ENCODE measurements at regions of chr21 and their contacts with region 1.

Region 1: DNA sequence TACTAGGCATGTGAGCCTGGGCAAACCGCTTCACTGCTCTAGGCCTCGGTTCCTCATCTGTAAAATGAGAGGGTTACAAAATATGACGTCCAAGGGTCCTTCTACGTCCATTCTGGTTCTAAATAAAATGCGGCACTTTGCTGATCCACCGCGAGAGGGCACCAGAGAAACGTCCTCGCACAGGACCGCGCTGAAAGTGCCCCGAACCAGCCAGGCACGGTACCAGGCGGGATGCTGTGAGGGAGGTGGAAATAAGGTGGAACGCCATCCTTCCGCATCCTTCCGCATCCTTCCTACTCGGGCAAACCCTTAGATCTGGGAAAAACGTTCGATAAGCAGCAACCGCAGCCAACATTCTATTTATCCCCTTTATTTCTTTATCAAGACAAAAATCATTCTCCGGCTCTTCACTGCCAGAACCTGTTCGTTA is 60.3 kb upstream of the KRTAP19-8 start:
- DNase-seq: peak; percentile 67
- CTCF ChIP-seq: peak; percentile 90

Region 2: DNA sequence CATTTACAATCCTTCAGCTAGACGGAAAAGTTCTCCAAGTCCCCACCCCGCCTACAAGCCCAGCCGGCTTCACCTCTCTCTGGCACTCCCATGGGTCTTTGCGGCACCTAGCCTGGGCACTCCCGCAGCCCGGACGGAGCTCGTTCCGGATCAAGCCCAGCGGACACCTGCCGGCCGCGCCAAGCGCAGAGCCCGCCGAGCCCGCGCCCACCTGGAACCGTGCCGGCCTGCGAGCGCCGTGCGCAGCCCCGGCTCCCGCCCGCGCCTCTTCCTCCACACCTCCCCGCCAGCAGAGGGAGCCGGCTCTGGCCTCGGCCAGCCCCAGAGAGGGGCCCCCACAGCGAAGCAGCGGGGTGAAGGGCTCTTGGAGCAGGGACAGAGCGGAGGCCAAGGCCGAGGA is 10.3 kb before region 1 on chr21:
- CTCF ChIA-PET with region 1: interaction called, 14 read pairs
- POLR2A ChIA-PET with region 1: no interaction called
- DNase-seq: no peak
- CTCF ChIP-seq: no peak

Region 3: DNA sequence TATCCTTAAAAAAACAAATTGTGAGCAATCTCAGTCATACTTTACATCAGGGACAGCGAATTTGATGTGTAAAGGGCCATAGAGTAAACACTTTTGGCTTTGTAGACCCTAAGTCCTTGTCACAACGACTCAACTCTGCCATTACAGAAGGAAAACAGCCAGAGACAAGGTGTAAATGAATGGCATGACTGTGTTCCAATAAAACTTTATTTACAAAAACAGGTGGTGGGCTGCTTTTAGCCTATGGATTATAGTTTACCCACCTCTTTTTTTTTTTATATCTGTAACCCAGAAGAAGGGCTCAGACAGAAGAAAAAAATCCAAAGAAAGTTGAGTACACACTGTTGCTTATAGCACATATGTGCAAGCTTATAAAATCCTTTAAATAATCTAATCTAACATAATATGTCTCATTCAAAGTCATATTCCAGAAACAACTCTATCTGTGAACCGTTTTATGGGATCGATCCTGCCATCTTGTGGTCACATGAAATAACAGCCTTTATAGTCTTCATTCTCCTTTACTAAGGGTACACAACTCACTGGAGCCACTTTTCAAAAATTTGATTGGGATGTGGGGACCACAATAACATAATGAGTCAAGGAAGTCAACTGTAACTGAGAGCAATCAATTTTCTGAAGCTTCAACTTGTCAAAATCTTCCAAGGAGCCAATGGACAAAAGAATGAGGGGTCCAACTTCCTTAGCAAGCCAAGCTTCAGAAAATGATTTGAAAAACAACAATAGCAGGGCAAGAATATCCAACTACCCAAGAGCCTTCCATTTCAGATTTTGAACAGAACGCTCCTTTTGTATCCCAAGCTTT is 81.9 kb after region 1 on chr21:
- CTCF ChIA-PET with region 1: interaction called, 30 read pairs
- POLR2A ChIA-PET with region 1: no interaction called
- DNase-seq: peak; percentile 39
- CTCF ChIP-seq: peak; percentile 57

Region 4: GRCh38 chr21:31604591-31605190 is 506.1 kb after region 1 on chr21:
- CTCF ChIA-PET with region 1: interaction called, 15 read pairs
- POLR2A ChIA-PET with region 1: no interaction called
- DNase-seq: peak; percentile 70
- CTCF ChIP-seq: peak; percentile 87

Measured in GM10248 (cell line).